ENCODE measurements at regions of chr6 and their contacts with region 1.

Region 1: DNA sequence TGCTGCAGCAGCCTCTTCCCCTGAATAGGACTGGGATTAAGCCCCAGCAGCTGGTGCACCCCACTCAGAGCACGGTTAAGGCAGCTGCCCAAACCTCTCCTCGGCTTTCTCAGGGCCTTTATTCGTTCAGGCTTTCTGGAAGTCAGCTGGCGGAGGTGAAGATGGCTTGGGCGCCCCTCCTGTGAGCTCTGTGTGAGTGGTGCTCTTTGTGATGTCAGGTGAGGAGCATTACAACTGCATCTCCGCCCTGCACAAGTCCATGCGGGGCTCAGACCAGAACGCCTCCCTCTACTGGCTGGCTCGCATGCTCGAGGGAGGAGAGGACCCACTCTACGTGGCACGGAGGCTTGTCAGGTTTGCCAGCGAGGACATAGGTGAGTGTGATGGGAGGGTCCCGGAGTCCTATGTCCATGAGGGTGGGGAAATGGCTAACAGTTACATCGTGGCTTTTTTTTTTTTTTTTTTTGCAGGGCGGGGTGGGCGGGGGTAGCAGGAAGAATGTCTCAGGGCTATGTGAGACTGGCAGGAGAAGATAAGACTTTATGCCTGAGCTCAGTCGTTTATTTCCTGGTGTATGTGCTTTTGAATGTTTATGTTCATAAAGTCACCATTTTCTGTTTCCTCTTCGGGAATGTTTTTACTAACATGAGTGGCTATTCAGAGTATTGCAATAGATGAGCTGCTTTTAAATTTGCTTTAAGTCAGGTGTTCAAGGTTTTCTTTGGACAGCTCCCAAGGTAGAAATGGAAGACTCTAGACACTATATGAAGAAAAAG is 18.2 kb downstream of the WRNIP1 start:
- DNase-seq: peak in 1 of 2 donors; percentile 66
- H3K4me3 ChIP-seq: no peak overlapping the region
- H3K27ac ChIP-seq: peak overlapping the region in 4 of 5 donors; percentile 34 to 62 (median 60)
- H3K4me1 ChIP-seq: peaks cover 6 to 27% (median 18%) of the 10 kb centered on the region in 4 donors
- H3K27me3 ChIP-seq: no peaks in the 10 kb centered on the region
- CTCF ChIP-seq: no peak
- EP300 ChIP-seq: no peak
- POLR2A ChIP-seq: no peak

Region 2: DNA sequence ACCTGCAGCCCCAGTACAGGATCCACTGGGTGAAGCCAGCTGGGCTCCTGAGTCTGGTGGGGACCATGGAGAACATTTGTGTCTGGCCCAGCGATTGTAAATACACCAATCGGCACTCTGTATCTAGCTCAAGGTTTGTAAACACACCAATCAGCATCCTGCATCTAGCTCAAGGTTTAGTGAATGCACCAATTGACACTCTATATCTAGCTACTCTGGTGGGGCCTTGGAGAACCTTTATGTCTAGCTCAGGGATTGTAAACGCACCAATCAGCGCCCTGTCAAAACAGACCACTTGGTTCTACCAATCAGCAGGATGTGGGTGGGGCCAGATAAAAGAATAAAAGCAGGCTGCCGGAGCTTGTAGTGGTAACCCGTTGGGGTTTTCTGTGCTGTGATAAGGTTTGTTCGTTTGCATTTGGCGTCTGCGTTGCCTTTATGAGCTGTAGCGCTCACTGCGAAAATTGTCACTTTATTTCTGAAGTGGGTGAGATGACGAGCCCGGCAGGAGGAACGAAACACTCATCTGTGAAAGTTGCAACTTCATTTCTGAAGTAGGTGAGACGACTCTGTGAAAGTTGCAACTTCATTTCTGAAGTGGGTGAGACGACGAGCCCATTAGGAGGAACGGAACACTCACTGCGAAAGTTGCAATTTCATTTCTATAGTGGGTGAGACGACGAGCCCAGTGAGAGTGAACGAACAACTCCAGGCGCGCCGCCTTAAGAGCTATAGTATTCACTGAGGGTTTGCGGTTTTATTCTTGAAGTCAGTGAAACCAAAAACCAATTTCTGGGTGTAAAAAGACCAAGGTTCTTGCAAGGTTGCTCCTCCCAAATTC is 156.9 kb after region 1 on chr6:
- intact Hi-C with region 1: loop called (anchors 10 kb)
- DNase-seq: peak; percentile 25 to 49
- H3K4me3 ChIP-seq: no peak overlapping the region
- H3K27ac ChIP-seq: peak overlapping the region in 1 of 5 donors; percentile 5
- H3K4me1 ChIP-seq: peaks cover 0 to 15% (median 9%) of the 10 kb centered on the region in 4 donors
- H3K27me3 ChIP-seq: no peaks in the 10 kb centered on the region
- CTCF ChIP-seq: no peak
- EP300 ChIP-seq: no peak
- POLR2A ChIP-seq: no peak

Measured in stomach (tissue), 19 donors.